ENCODE measurements at regions of chr19 and their contacts with region 1.

Region 1: GRCh38 chr19:38929929-38930775 is at the start of gene SARS2:
- DNase-seq: peak; percentile 90
- H3K4me3 ChIP-seq: peak within 1 kb of the TSS; percentile 99
- H3K27ac ChIP-seq: peak within 1 kb of the TSS; percentile 86
- H3K27me3 ChIP-seq: no peaks in the 10 kb centered on the region
- CTCF ChIP-seq: peak; percentile 98
- polyA plus RNA-seq, gene SARS2: 10.1 and 16.2 TPM in 2 replicates

Region 2: DNA sequence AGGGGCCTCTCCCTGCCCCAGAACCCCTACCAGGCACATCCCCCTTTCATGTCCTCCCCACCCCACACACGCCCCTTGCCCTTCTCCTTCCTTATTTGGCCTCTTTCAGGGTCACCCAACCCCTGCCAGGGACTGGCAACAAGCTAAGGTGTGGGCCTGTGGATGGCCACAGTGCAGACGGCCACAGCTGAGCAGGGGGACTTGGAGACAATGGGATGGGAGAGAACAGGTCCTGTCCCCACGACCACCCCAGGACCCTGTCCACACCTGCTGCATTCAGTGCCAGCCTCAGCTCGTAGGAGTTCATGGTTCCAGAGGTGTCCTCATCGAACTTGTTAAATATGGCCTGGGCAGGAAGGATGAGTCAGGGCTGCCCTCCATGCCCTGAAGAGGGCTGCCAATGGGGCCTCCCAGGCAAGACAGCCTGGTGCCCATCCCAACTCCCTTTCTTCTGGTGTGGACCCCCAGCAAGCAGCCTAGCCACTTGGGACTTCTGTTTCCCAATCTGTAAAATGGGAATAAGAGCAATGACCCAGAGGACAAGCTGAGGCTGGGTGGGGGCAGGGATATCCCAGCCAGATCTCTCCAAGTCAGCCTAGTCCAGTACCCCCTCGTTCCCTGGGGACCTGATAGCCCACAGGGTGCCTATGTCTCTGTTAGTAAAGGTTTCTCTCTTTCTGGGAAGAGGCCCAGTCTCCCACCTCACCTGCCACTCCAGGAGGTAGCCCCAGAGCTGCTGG is 196.5 kb before region 1 on chr19:
- CTCF ChIA-PET with region 1: interaction called, 13 read pairs
- POLR2A ChIA-PET with region 1: no interaction called
- DNase-seq: no peak
- H3K4me3 ChIP-seq: no peak overlapping the region
- H3K27ac ChIP-seq: peak overlapping the region; percentile 52
- H3K27me3 ChIP-seq: peaks cover 3% of the 10 kb centered on the region
- CTCF ChIP-seq: no peak

Region 3: GRCh38 chr19:38792250-38793111 is 137.7 kb before region 1 on chr19:
- CTCF ChIA-PET with region 1: no interaction called
- POLR2A ChIA-PET with region 1: no interaction called
- DNase-seq: no peak
- H3K4me3 ChIP-seq: no peak overlapping the region
- H3K27ac ChIP-seq: peak overlapping the region; percentile 11
- H3K27me3 ChIP-seq: no peaks in the 10 kb centered on the region
- CTCF ChIP-seq: peak; percentile 20; the same call in 1 of the 2 replicates

Region 4: DNA sequence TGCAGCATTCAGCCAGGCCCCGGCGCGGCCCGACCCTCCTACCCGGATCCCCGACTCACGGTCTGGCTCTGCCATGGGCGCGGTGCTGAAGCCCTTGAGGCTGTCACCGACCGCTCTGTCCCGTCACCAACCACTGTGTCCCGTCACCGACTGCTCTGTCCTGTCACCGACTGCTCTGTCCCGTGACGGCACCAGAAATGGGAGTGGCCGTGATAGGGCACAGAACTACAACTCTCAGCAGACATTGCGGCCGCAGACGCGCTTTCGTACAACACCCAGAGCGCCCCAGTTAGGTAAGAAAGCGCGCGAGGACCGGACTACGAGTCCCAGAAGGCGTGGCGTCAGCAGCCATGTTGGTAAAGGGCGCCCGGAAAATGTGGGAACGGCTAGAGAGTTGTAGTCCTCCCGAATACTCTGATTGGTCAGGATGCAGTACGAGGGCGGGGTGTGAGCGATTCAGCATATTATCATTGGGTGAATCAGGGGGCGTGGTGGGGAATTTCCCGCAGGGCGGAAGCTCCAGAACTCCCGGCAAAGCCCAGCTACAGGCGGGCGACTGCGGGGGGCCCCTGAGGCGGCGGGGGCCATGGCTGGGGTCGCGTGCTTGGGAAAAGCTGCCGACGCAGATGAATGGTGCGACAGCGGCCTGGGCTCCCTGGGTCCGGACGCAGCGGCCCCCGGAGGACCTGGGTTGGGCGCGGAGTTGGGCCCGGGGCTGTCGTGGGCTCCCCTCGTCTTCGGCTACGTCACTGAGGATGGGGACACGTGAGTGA is 30.5 kb before region 1 on chr19 and contains the starts of genes NFKBIB and SIRT2:
- CTCF ChIA-PET with region 1: interaction called, 23 read pairs
- POLR2A ChIA-PET with region 1: interaction called, 6 read pairs
- DNase-seq: peak; percentile 98
- H3K4me3 ChIP-seq: peak within 1 kb of the TSS; percentile 97
- H3K27ac ChIP-seq: peak within 1 kb of the TSS; percentile 82
- H3K27me3 ChIP-seq: no peaks in the 10 kb centered on the region
- CTCF ChIP-seq: no peak
- polyA plus RNA-seq, gene NFKBIB: 9.9 and 14.1 TPM in 2 replicates
- polyA plus RNA-seq, gene SIRT2: 45.5 and 61.3 TPM in 2 replicates

Region 5: DNA sequence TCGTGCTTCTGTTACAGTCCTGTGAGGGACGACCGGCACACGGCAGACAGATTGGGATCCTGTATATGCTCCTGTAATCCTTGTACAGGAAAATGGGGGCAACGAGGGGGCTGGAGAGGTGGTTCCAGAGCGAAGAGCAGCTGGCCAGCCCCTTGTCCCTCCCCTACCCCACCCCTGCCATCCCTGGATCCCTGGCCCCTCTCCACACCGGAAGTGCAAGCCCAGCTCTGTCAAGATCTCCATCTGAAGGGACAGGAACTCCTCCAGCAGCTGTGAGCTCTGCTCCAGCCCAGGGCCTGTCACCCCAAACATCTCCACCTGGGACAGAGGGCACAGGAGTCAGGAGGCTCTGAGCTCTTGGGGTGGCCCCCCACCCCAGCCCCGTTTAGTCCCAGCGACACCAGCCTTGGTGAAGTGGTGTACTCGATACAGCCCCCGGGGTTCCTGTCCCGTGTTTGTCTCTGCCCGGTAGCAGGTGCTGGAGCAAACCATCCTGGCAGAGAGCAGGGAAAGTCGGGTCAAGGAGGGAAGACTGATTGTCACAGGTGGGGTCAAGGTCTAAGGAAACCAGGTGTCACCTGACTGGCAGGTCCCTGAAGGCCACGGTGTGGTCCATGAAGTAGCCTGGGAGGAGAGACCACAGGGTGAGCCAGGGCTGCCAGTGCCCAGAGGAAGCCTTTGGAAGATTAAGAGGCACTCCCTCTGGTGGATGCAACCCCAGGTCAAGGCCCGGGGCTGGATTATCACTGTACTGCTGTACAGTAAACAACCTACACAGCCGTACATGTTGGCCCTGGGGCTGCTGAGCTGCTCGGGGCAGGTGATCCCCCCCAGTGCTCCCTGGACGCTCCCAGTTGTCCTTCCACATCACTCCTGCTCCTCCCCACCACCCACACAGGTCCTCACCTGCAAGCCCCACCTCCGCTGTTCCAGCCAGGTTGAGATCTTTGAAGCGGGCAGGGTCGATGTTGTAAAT is 12.3 kb before region 1 on chr19:
- CTCF ChIA-PET with region 1: interaction called, 17 read pairs
- POLR2A ChIA-PET with region 1: no interaction called
- DNase-seq: no peak
- H3K4me3 ChIP-seq: no peak overlapping the region
- H3K27ac ChIP-seq: no peak overlapping the region
- H3K27me3 ChIP-seq: no peaks in the 10 kb centered on the region
- CTCF ChIP-seq: 0 out of 2 replicates have a peak, but pooled peaks have one; percentile 16

Region 6: DNA sequence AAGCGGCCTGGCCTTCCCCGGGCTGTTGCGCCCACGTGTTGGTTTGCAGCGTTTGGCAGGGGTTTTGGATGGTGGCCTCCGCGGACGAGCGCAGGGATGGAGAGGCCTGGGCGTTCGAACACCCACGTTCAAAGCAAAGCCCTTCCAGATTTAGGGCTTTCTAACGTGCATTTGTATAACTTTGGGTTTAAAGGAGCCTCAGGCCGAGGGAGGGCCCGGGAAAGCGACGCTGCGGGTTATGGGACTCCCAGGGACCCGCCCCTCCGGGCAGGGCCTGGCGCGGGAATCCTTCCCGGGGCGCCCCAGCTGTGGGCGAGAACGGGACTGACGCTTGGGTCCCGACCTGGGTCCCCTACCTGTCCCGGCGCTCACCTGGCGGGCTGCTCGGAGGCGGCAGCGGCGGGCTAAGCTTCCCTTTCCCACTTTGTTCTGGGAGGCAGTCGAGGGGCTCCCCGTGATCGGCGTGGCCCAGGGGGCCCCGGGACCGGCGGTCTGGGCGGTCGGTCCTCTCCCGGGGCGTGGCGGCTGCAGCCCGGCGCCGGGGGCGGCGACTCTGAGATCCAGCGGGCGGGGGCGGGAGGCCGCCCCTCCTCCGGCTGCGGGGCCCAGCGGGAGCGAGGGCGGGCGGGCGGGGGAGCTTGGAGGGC is 45.2 kb after region 1 on chr19 and contains the start of gene FBXO17:
- CTCF ChIA-PET with region 1: interaction called, 11 read pairs
- POLR2A ChIA-PET with region 1: no interaction called
- DNase-seq: no peak
- H3K4me3 ChIP-seq: peak within 1 kb of the TSS; percentile 74
- H3K27ac ChIP-seq: peak within 1 kb of the TSS; percentile 84
- H3K27me3 ChIP-seq: no peaks in the 10 kb centered on the region
- CTCF ChIP-seq: no peak
- polyA plus RNA-seq, gene FBXO17: 10.8 and 11.6 TPM in 2 replicates

Region 7: DNA sequence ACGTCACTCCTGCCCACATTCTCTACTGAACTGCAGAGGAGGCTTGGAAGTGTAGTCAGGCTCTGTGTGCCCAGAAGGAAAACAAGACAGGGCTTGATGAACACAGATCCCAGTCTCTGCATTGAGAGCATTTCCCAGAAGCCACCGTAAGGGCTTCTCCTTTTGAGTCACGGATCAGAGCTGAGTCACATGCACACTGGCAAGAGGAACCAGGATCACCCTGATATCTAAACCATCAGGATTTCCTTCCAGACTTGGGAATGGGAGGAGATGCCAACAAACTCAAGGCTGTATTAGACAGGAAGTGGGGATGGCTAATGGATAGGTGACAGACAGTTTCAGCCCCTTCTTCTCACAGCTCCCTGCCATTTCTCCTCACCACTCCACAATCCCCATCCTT is 63.1 kb after region 1 on chr19:
- CTCF ChIA-PET with region 1: no interaction called
- POLR2A ChIA-PET with region 1: no interaction called
- DNase-seq: no peak
- H3K4me3 ChIP-seq: no peak overlapping the region
- H3K27ac ChIP-seq: peak overlapping the region; percentile 12
- H3K27me3 ChIP-seq: no peaks in the 10 kb centered on the region
- CTCF ChIP-seq: no peak